T-cell (primary cell): ENCODE measurements at regions of chr1 and their contacts with region 1.

Region 1: DNA sequence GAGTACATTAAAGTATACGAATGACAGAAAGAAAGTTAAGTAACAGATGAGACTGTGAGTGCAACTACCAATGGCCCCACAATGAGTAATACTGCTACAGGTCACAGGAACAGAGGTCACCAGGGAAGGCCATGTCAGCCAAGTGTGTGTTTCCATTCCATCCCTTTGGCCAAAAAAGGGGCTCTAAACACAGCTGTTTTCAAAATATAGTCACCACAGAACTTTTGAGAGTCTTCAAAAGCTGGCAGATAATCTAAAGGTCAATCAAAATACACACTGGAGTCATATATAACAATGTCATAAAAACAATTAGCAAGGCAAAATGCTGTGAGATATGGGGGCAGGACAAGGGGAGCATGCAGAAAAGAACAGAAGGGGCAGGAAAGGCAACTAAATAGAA is 10.2 kb downstream of the USP24 start:
- DNase-seq: no peak
- ATAC-seq: no peak
- H3K4me3 ChIP-seq: no peak overlapping the region
- H3K4me3 Mint-ChIP-seq: no peak overlapping the region
- H3K27ac ChIP-seq: no peak overlapping the region
- H3K27ac Mint-ChIP-seq: peak overlapping the region; percentile 1 to 2
- H3K4me1 ChIP-seq: peaks cover 21 to 51% of the 10 kb centered on the region in 2 experiments
- H3K4me1 Mint-ChIP-seq: peaks cover 73 to 84% (median 80%) of the 10 kb centered on the region in 3 donors
- H3K27me3 ChIP-seq: no peaks in the 10 kb centered on the region
- H3K27me3 Mint-ChIP-seq: no peaks in the 10 kb centered on the region

Region 2: DNA sequence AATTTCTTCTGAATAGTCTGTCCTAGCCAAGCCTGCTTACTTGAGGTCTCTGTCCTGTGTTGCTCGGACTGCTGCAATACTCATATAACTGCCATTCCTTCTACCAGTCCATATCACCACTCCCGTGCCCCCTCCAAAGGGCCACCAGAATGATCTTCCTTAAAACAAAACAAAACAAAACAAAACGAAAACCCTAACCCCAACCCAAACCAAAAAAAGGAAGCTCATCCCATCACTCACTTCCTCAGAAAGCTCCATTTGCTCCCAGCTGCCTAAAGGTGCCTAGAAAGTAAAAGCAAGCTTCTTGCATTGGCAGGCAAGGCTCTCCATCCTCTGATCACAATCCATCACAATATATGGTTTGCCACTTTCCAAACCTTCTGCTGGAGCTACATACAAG is 10.1 kb before region 1 on chr1:
- CTCF ChIA-PET with region 1: no interaction called
- POLR2A ChIA-PET with region 1: interaction called in 1 of 2 experiments, 12 read pairs
- DNase-seq: no peak
- ATAC-seq: no peak
- H3K4me3 ChIP-seq: no peak overlapping the region
- H3K4me3 Mint-ChIP-seq: no peak overlapping the region
- H3K27ac ChIP-seq: no peak overlapping the region
- H3K27ac Mint-ChIP-seq: peak overlapping the region; percentile 2 to 11
- H3K4me1 ChIP-seq: peaks cover 12 to 13% of the 10 kb centered on the region in 2 experiments
- H3K4me1 Mint-ChIP-seq: peaks cover 73 to 85% (median 79%) of the 10 kb centered on the region in 3 donors
- H3K27me3 ChIP-seq: no peaks in the 10 kb centered on the region
- H3K27me3 Mint-ChIP-seq: no peaks in the 10 kb centered on the region

Region 3: DNA sequence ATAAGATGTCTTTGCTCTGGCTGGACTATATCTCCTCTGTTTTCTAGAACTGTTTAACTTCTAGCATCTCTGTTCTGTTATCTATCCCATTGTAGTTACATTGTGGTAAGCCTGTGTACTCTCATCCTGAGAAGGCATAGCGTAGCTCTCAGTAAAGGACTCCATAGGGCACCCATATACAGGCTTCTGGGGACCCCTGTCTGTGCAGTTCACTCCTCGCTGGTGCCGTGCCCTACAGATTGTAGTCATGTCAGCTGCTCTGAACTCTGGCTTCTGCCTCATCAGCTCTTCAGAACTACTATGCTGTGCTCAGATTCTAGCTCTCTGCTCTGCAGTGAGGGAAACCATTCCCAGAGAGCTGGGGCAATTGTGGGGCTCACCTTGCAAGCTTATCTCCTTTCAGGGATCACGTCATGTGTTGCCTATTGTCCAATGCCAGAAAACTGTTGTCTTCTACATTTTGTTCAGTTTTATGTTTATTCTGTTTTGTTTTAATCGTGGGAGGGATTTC is 191.4 kb after region 1 on chr1:
- CTCF ChIA-PET with region 1: no interaction called
- POLR2A ChIA-PET with region 1: no interaction called
- DNase-seq: no peak
- ATAC-seq: no peak
- H3K4me3 ChIP-seq: no peak overlapping the region
- H3K4me3 Mint-ChIP-seq: no peak overlapping the region
- H3K27ac ChIP-seq: no peak overlapping the region
- H3K27ac Mint-ChIP-seq: no peak overlapping the region
- H3K4me1 ChIP-seq: no peaks in the 10 kb centered on the region
- H3K4me1 Mint-ChIP-seq: no peaks in the 10 kb centered on the region
- H3K27me3 ChIP-seq: peaks cover 0 to 5% of the 10 kb centered on the region in 2 experiments
- H3K27me3 Mint-ChIP-seq: peaks cover 18 to 35% of the 10 kb centered on the region in 2 donors